Right ventricle myocardium superior (tissue), 1 donor: ENCODE measurements at regions of chr1 and their contacts with region 1.

Region 1: GRCh38 chr1:90964444-90965035 is 57.3 kb downstream of the ZNF644 start:
- DNase-seq: no peak
- ATAC-seq: peak; percentile 69

Region 2: GRCh38 chr1:90579212-90579802 is 385.2 kb before region 1 on chr1:
- intact Hi-C with region 1: loop called (anchors 10 kb)
- DNase-seq: no peak
- ATAC-seq: peak; percentile 49

Region 3: GRCh38 chr1:90809996-90810395 is 154.5 kb before region 1 on chr1:
- intact Hi-C with region 1: no loop called
- DNase-seq: no peak
- ATAC-seq: no peak

Region 4: DNA sequence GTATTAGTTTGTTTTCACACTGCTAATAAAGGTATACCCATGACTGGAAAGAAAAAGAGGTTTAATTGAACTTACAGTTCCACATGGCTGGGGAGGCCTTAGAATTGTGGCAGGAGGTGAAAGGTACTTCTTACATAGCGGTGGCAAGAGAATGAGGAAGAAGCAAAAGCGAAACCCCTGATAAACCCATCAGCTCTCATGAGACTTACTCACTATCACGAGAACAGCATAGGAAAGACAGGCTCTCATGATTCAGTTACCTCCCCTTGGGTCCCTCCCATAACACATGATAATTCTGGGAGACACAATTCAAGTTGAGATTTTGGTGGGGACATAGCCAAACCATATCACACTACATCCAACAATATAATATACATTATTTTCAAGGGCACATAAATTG is 101.8 kb before region 1 on chr1:
- intact Hi-C with region 1: no loop called
- DNase-seq: no peak
- ATAC-seq: no peak

Region 5: GRCh38 chr1:90911353-90911752 is 53.2 kb before region 1 on chr1:
- intact Hi-C with region 1: no loop called
- DNase-seq: no peak
- ATAC-seq: no peak